Transverse colon (tissue), 4 donors: ENCODE measurements at regions of chr1 and their contacts with region 1.

Region 1: DNA sequence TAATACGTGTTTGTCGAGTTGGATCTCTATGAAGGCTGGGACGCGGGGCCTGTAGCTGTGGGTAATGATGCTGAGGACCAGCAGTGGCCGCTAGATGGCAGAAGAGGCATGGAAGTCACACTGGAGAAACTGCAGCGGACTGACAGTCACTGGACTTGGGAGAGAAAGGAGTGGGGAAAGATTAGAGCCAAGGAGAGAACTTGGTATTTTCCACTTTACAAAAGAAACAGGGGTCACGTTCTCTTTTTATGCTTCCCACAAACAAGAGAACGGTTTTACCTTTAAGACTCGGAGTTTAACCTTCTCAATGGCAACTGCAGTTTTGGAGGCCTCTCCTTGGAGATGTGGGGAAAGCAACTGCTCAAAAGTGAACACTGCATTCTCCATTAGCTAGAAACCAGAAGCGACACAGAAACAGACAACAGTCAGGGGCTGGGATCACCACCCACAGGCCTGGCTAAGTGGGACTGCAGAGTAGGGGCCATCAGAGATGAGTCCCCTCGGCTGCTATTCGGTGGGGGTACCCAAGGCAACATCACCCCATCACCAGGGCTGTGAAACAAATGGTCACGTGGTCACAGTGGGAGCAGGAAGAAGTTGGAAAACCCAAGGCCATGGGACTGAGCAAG is 51.1 kb upstream of the EDEM3 start:
- DNase-seq: peak; percentile 91
- H3K4me3 ChIP-seq: no peak overlapping the region
- H3K27ac ChIP-seq: peak overlapping the region in 3 of 4 donors; percentile 2 to 42 (median 16)
- H3K4me1 ChIP-seq: peaks cover 3 to 20% (median 4%) of the 10 kb centered on the region in 4 donors
- H3K27me3 ChIP-seq: no peaks in the 10 kb centered on the region
- CTCF ChIP-seq: peak; percentile 88 to 97 (median 89)
- EP300 ChIP-seq: no peak
- POLR2A ChIP-seq: no peak

Region 2: DNA sequence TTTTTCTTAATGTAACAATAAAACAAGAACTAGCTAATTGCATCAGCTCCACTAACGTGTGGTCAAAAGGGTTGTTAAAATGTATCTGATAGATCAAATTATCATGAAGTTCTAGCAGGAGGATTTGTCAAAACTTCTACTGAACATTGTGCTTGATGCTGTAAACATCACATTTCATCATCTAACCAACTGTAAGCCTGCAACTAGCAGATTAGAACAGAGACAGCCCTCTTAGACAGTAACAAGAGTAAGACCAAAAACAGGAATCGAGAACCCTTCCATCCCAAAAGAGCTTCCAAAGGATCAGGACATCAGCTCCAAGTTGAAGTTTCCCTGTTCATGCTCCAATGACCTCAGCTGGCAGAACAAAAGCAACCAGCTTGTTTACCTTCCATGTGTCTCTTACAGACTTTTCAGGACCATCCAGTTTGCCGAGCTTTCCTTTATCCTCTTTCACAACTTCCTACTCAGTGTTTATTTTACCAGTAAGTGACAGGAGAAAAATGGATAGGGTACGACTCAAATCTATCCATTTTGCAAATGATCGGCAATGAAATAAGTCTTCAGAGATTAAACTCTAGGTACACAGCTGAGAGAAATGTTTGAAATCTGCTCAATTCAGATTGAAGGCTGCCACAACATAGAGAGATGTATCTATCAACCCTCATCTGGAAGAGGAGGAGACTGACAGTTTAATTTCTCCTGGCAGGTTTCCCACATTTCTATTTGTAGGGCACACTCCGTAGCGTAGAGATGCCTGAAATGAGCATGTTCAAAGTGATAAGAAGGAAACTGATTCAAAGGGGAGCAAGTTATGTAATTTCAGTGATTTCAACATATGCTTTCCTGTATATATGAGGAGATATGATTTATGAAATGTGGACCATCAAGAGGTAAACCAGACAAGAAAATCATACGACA is 124.2 kb after region 1 on chr1:
- in situ Hi-C with region 1: no loop called
- intact Hi-C with region 1: no loop called
- DNase-seq: no peak
- H3K4me3 ChIP-seq: no peak overlapping the region
- H3K27ac ChIP-seq: no peak overlapping the region
- H3K4me1 ChIP-seq: peaks cover 0 to 12% (median 9%) of the 10 kb centered on the region in 4 donors
- H3K27me3 ChIP-seq: peaks cover 74% of the 10 kb centered on the region
- CTCF ChIP-seq: no peak
- EP300 ChIP-seq: no peak
- POLR2A ChIP-seq: no peak

Region 3: GRCh38 chr1:184982002-184982954 is 176.5 kb after region 1 on chr1:
- in situ Hi-C with region 1: loop called (anchors 5 kb)
- intact Hi-C with region 1: loop called (anchors 2 kb)
- DNase-seq: peak; percentile 82
- H3K4me3 ChIP-seq: no peak overlapping the region
- H3K27ac ChIP-seq: no peak overlapping the region
- H3K4me1 ChIP-seq: peaks cover 0 to 7% (median 0%) of the 10 kb centered on the region in 4 donors
- H3K27me3 ChIP-seq: peaks cover 21% of the 10 kb centered on the region
- CTCF ChIP-seq: peak; percentile 81 to 92 (median 87)
- EP300 ChIP-seq: no peak
- POLR2A ChIP-seq: no peak

Region 4: GRCh38 chr1:185156854-185157598 is 351.2 kb after region 1 on chr1 and contains the starts of genes SWT1 and TRMT1L:
- in situ Hi-C with region 1: loop called in 3 of 4 experiments (anchors 25 kb)
- intact Hi-C with region 1: no loop called
- DNase-seq: peak; percentile 99
- H3K4me3 ChIP-seq: peak within 1 kb of the TSS; percentile 70 to 95 (median 84)
- H3K27ac ChIP-seq: peak within 1 kb of the TSS; percentile 97 to 100 (median 98)
- H3K4me1 ChIP-seq: peaks cover 6 to 29% (median 18%) of the 10 kb centered on the region in 4 donors
- H3K27me3 ChIP-seq: no peaks in the 10 kb centered on the region
- CTCF ChIP-seq: peak in 1 of 5 experiments; percentile 18
- EP300 ChIP-seq: no peak
- POLR2A ChIP-seq: peak; percentile 99
- total RNA-seq, gene SWT1: 2.8 to 12.3 (median 10.1) TPM
- total RNA-seq, gene TRMT1L: 18.3 to 67.7 (median 20.9) TPM

Region 5: DNA sequence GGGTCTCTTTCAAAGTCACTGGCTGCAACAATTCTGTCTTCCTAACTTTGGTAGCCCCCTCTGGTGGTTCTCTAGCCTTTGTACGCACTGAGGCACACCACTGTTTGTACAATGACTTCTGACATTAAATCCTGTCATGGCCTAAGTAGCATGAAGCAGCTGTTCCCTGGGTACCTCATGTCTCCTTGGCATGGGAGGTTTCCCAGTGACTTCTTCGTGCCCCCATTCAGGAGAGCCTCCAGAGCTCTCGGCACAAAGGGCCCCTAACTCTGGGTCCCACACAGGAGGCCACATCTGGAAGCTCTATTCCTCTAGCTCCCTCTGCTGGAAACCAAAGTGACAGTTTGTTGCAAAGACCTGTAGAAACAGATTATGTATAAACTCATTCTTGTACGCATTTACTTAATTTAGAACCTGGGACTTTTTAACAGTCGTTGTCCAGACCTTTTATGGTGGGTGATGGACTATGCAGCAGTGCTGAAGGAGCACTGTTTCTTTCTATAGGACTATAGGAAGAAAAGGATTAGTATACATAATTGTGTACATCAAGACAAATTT is 364.6 kb after region 1 on chr1:
- in situ Hi-C with region 1: loop called in 3 of 4 experiments (anchors 25 kb)
- intact Hi-C with region 1: loop called (anchors 10 kb)
- DNase-seq: no peak
- H3K4me3 ChIP-seq: no peak overlapping the region
- H3K27ac ChIP-seq: no peak overlapping the region
- H3K4me1 ChIP-seq: no peaks in the 10 kb centered on the region
- H3K27me3 ChIP-seq: no peaks in the 10 kb centered on the region
- CTCF ChIP-seq: peak; percentile 44 to 53 (median 51)
- EP300 ChIP-seq: no peak
- POLR2A ChIP-seq: no peak

Region 6: DNA sequence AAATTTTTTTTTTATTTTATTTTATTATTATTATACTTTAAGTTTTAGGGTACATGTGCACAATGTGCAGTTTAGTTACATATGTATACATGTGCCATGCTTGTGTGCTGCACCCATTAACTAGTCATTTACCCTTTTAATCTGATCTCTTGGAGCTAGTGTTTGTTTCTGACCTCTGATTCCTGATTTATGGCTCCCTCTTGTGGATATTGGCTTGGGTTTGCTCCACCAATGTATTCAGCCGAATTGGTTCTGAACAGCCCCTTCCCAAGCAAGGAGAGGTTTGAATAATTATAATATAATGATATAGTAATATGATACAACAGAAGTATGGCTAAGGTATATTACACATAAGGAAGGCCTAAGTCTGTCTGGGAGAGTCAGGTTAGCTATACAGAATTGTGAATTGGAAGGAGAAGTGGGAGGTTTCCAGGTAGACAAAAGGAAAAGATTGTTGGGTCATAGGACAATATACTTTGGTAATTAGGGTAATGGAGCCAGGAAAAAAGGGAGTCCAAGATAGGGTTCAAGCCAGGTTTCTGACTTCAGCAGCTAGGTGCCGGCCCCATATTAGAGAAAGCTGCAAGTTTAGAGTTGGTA is 875.4 kb after region 1 on chr1:
- in situ Hi-C with region 1: loop called in 2 of 4 experiments (anchors 25 kb)
- intact Hi-C with region 1: no loop called
- DNase-seq: no peak
- H3K4me3 ChIP-seq: no peak overlapping the region
- H3K27ac ChIP-seq: no peak overlapping the region
- H3K4me1 ChIP-seq: peaks cover 0 to 21% (median 0%) of the 10 kb centered on the region in 4 donors
- H3K27me3 ChIP-seq: no peaks in the 10 kb centered on the region
- CTCF ChIP-seq: peak; percentile 29 to 64 (median 50)
- EP300 ChIP-seq: no peak
- POLR2A ChIP-seq: no peak